ENCODE measurements at regions of chr1 and their contacts with region 1.

Region 1: GRCh38 chr1:168987332-168987731 is 119.2 kb upstream of the ATP1B1 start:
- DNase-seq: no peak
- H3K4me3 ChIP-seq: no peak overlapping the region
- H3K27ac ChIP-seq: no peak overlapping the region
- H3K4me1 ChIP-seq: no peaks in the 10 kb centered on the region
- CTCF ChIP-seq: no peak

Region 2: DNA sequence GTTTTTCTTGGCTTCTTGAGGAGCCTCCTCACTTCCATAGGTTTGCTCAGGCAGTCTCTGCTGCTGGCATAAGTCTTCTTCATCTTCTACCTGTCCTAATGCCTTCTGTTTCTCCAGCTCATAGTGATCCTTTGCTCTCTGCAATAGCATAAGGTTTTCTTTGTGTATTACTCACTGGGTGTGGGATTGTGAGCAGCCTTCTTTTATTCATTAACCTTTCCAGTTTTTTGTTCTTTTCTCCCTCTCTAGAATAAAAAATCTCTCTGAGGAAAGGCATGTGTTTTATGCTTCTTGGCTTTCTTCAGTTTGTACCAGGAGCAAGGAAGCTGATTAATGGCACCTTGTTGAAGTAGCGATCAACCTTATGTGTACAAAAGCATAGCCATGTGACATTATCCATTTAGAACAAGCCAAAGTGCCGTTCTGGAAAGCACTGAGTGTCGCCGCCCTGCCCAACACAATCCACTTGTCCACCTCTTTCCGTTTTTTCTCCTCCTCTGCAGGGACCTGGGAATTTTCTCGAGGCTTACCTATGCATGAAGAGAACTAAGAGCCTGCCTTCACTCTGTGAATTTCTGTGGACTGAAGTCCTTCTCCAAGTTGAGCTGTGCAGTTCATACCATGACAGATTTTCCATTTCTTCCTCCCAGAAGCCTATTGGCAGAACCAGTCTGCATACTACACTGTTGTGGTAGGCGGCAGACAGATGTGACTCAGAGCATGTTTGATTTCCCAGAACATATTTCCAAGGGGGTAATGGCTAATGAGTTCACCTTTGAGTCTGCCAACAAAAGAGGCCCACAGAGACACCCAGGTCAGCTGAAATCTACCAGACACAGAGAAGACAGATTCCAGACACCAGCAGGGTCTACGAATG is 297.4 kb before region 1 on chr1:
- CTCF ChIA-PET with region 1: no interaction called
- POLR2A ChIA-PET with region 1: no interaction called
- intact Hi-C with region 1: no loop called
- DNase-seq: no peak
- H3K4me3 ChIP-seq: no peak overlapping the region
- H3K27ac ChIP-seq: no peak overlapping the region
- H3K4me1 ChIP-seq: no peaks in the 10 kb centered on the region
- CTCF ChIP-seq: no peak

Region 3: DNA sequence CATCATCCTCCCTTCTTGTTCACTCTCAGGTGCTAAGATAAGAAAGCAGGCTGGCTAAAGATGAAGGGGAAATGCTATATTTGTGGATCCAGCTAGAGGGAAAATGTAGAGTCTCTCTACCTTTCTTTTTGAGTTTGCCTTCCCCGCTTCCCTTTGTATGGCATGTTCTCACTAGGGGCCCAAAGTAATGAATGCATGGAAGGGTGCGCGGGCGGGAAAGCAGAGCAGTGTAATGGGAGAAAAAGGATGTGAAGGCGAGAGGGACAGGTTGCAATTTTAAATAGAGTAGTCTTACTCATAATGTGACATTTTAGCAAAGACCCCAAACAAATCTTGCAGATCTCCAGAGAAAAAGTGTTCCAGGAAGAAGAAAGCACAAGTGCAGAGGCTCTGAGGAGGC is 14.0 kb after region 1 on chr1:
- CTCF ChIA-PET with region 1: no interaction called
- POLR2A ChIA-PET with region 1: no interaction called
- intact Hi-C with region 1: no loop called
- DNase-seq: no peak
- H3K4me3 ChIP-seq: no peak overlapping the region
- H3K27ac ChIP-seq: no peak overlapping the region
- H3K4me1 ChIP-seq: no peaks in the 10 kb centered on the region
- CTCF ChIP-seq: no peak

Region 4: GRCh38 chr1:169044296-169044695 is 57.0 kb after region 1 on chr1:
- CTCF ChIA-PET with region 1: no interaction called
- POLR2A ChIA-PET with region 1: no interaction called
- intact Hi-C with region 1: loop called (anchors 10 kb)
- DNase-seq: peak; percentile 52
- H3K4me3 ChIP-seq: no peak overlapping the region
- H3K27ac ChIP-seq: peak overlapping the region; percentile 13
- H3K4me1 ChIP-seq: peaks cover 17% of the 10 kb centered on the region
- CTCF ChIP-seq: no peak